ENCODE measurements at regions of chrX and their contacts with region 1.

Region 1: GRCh38 chrX:115642895-115643530 is 82.0 kb downstream of the PLS3 start:
- DNase-seq: no peak
- H3K4me3 ChIP-seq: no peak overlapping the region
- H3K27ac ChIP-seq: peak overlapping the region in 3 of 4 donors; percentile 8 to 53 (median 52)
- H3K4me1 ChIP-seq: peaks cover 0 to 15% (median 4%) of the 10 kb centered on the region in 4 donors
- H3K27me3 ChIP-seq: no peaks in the 10 kb centered on the region
- CTCF ChIP-seq: peak; percentile 86 to 99 (median 92)
- EP300 ChIP-seq: no peak
- POLR2A ChIP-seq: no peak

Region 2: GRCh38 chrX:115449742-115450141 is 193.3 kb before region 1 on chrX:
- intact Hi-C with region 1: loop called (anchors 10 kb)
- DNase-seq: no peak
- H3K4me3 ChIP-seq: no peak overlapping the region
- H3K27ac ChIP-seq: no peak overlapping the region
- H3K4me1 ChIP-seq: peaks cover 0 to 3% (median 0%) of the 10 kb centered on the region in 4 donors
- H3K27me3 ChIP-seq: no peaks in the 10 kb centered on the region
- CTCF ChIP-seq: no peak
- EP300 ChIP-seq: no peak
- POLR2A ChIP-seq: no peak

Region 3: GRCh38 chrX:115602729-115603389 is 40.2 kb before region 1 on chrX:
- intact Hi-C with region 1: no loop called
- DNase-seq: no peak
- H3K4me3 ChIP-seq: no peak overlapping the region
- H3K27ac ChIP-seq: no peak overlapping the region
- H3K4me1 ChIP-seq: peaks cover 0 to 19% (median 6%) of the 10 kb centered on the region in 4 donors
- H3K27me3 ChIP-seq: peaks cover 0 to 4% (median 0%) of the 10 kb centered on the region in 4 donors
- CTCF ChIP-seq: no peak
- EP300 ChIP-seq: no peak
- POLR2A ChIP-seq: no peak

Measured in esophagus muscularis mucosa (tissue), 4 donors.